Activated T-helper 1 cell treated with anti-CD3 and anti-CD28 coated beads, Interleukin-12 subunit alpha, Interleukin-12 subunit beta, Interleukin-2, Interleukin-4 antibody, amounts not matched to agents 30 ng/mL and 10 ng/mL and 1 ng/mL, durations not matched to agents 14 hours and 24 hours and 36 hours (primary cell): ENCODE measurements at regions of chr17 and their contacts with region 1.

Region 1: GRCh38 chr17:75978938-75979704 is at the starts of genes ACOX1 and TEN1:
- DNase-seq: peak; percentile 92
- H3K4me3 Mint-ChIP-seq: peak within 1 kb of the TSS; percentile 91
- H3K27ac Mint-ChIP-seq: peak within 1 kb of the TSS; percentile 95
- H3K4me1 Mint-ChIP-seq: peaks cover 33% of the 10 kb centered on the region
- H3K27me3 Mint-ChIP-seq: no peaks in the 10 kb centered on the region
- total RNA-seq, gene ACOX1: 25.3 and 28.2 TPM in 2 replicates
- total RNA-seq, gene TEN1: 10.7 and 15.4 TPM in 2 replicates

Region 2: GRCh38 chr17:75667021-75667790 is 311.9 kb before region 1 on chr17 and contains the starts of genes RECQL5 and SAP30BP:
- intact Hi-C with region 1: loop called (anchors 1 kb)
- DNase-seq: peak; percentile 98
- H3K4me3 Mint-ChIP-seq: peak within 1 kb of the TSS; percentile 79
- H3K27ac Mint-ChIP-seq: peak within 1 kb of the TSS; percentile 71
- H3K4me1 Mint-ChIP-seq: peaks cover 11% of the 10 kb centered on the region
- H3K27me3 Mint-ChIP-seq: no peaks in the 10 kb centered on the region
- total RNA-seq, gene RECQL5: 29.9 and 34.1 TPM in 2 replicates
- total RNA-seq, gene SAP30BP: 113 and 117 TPM in 2 replicates

Region 3: GRCh38 chr17:75784473-75785015 is 194.6 kb before region 1 on chr17 and contains the start of gene UNK:
- intact Hi-C with region 1: loop called (anchors 1 kb)
- DNase-seq: peak; percentile 94
- H3K4me3 Mint-ChIP-seq: peak within 1 kb of the TSS; percentile 92
- H3K27ac Mint-ChIP-seq: peak within 1 kb of the TSS; percentile 99
- H3K4me1 Mint-ChIP-seq: peaks cover 47% of the 10 kb centered on the region
- H3K27me3 Mint-ChIP-seq: peaks cover 2% of the 10 kb centered on the region
- total RNA-seq, gene UNK: 26.0 and 26.9 TPM in 2 replicates

Region 4: GRCh38 chr17:75904749-75905521 is 74.2 kb before region 1 on chr17 and contains the start of gene MRPL38:
- intact Hi-C with region 1: loop called (anchors 1 kb)
- DNase-seq: peak; percentile 96
- H3K4me3 Mint-ChIP-seq: peak within 1 kb of the TSS; percentile 99
- H3K27ac Mint-ChIP-seq: peak within 1 kb of the TSS; percentile 84
- H3K4me1 Mint-ChIP-seq: peaks cover 12% of the 10 kb centered on the region
- H3K27me3 Mint-ChIP-seq: no peaks in the 10 kb centered on the region
- total RNA-seq, gene MRPL38: 151 and 160 TPM in 2 replicates

Region 5: DNA sequence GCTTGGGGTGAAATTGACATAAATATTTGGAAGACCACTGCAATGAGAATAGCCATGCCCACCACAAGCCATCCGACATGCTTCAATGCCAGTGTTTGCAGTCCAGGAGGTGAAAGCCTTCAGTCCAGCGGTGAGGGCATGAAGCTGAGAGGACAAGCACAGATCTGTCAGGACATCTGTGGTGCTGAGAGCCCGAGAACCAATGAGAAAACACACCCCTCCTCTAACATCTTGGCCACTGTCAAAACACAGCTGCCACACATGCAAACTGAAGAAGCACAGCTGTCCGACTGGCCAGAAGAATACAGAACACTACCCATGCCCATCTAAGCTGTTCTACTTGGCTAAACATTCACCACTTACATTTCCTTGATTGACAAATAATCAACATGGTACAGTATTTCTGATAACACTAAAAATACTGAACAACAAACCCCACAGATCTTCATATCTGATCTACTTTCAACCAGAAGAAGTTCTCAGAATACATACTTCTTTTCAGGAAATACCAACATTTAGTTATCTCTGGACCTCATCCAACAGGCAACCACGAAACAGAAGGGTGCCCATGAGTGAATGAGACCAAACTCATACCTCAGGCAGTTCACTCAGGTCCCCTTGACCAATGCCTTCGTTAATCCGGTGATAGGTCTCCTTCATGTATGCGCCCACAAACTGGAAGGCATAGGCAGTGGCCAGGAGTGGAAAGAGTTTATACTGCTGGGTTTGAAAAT is 28.1 kb before region 1 on chr17:
- intact Hi-C with region 1: no loop called
- DNase-seq: no peak
- H3K4me3 Mint-ChIP-seq: no peak overlapping the region
- H3K27ac Mint-ChIP-seq: no peak overlapping the region
- H3K4me1 Mint-ChIP-seq: peaks cover 7% of the 10 kb centered on the region
- H3K27me3 Mint-ChIP-seq: no peaks in the 10 kb centered on the region

Region 6: GRCh38 chr17:75996665-75997590 is 17.8 kb after region 1 on chr17:
- intact Hi-C with region 1: loop called (anchors 1 kb)
- DNase-seq: peak; percentile 38
- H3K4me3 Mint-ChIP-seq: peak overlapping the region; percentile 65
- H3K27ac Mint-ChIP-seq: peak overlapping the region; percentile 87
- H3K4me1 Mint-ChIP-seq: peaks cover 26% of the 10 kb centered on the region
- H3K27me3 Mint-ChIP-seq: no peaks in the 10 kb centered on the region

Region 7: GRCh38 chr17:76141212-76142038 is 162.3 kb after region 1 on chr17 and contains the start of gene FOXJ1:
- intact Hi-C with region 1: loop called (anchors 1 kb)
- DNase-seq: peak; percentile 91
- H3K4me3 Mint-ChIP-seq: peak within 1 kb of the TSS; percentile 74
- H3K27ac Mint-ChIP-seq: peak within 1 kb of the TSS; percentile 65
- H3K4me1 Mint-ChIP-seq: peaks cover 53% of the 10 kb centered on the region
- H3K27me3 Mint-ChIP-seq: peaks cover 14% of the 10 kb centered on the region
- total RNA-seq, gene FOXJ1: 0.10 TPM in 1 of 2 replicates, not detected in the other

Region 8: GRCh38 chr17:76826330-76827068 is 847.4 kb after region 1 on chr17:
- intact Hi-C with region 1: no loop called
- DNase-seq: no peak
- H3K4me3 Mint-ChIP-seq: no peak overlapping the region
- H3K27ac Mint-ChIP-seq: no peak overlapping the region
- H3K4me1 Mint-ChIP-seq: no peaks in the 10 kb centered on the region
- H3K27me3 Mint-ChIP-seq: peaks cover 8% of the 10 kb centered on the region

Region 9: GRCh38 chr17:77666881-77667395 is 1687.8 kb after region 1 on chr17:
- intact Hi-C with region 1: loop called (anchors 10 kb)
- DNase-seq: peak; percentile 77
- H3K4me3 Mint-ChIP-seq: peak overlapping the region; percentile 88
- H3K27ac Mint-ChIP-seq: peak overlapping the region; percentile 97
- H3K4me1 Mint-ChIP-seq: peaks cover 35% of the 10 kb centered on the region
- H3K27me3 Mint-ChIP-seq: no peaks in the 10 kb centered on the region